ENCODE measurements at regions of chr3 and their contacts with region 1.

Region 1: DNA sequence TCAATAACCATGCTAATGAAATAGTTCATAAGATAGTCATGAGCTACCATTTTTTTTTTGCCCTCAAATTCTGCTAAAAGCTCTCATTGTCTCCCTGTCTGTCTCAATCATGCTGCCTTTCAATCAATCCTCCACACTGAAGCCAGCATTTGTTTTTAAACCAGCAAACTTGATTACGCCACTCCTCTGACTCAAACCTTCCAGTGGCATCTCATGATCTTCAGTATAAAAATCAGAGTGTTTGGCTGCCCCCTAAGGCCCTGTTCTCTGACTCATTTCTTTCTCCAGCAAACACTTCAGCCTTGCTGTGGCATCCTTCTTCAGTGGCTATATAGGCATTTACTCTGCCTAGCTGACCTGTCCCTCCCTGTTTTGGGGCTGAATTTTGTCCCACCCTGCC is 36.0 kb upstream of the EOMES start:
- DNase-seq: no peak
- H3K4me3 ChIP-seq: no peak overlapping the region
- H3K27ac ChIP-seq: no peak overlapping the region
- H3K4me1 ChIP-seq: no peaks in the 10 kb centered on the region
- H3K27me3 ChIP-seq: no peaks in the 10 kb centered on the region
- CTCF ChIP-seq: no peak

Region 2: GRCh38 chr3:27659279-27660021 is 98.6 kb before region 1 on chr3:
- CTCF ChIA-PET with region 1: no interaction called
- POLR2A ChIA-PET with region 1: no interaction called
- intact Hi-C with region 1: no loop called
- DNase-seq: peak; percentile 61
- H3K4me3 ChIP-seq: no peak overlapping the region
- H3K27ac ChIP-seq: no peak overlapping the region
- H3K4me1 ChIP-seq: no peaks in the 10 kb centered on the region
- H3K27me3 ChIP-seq: no peaks in the 10 kb centered on the region
- CTCF ChIP-seq: peak; percentile 79

Region 3: GRCh38 chr3:27737091-27737490 is 21.0 kb before region 1 on chr3:
- CTCF ChIA-PET with region 1: no interaction called
- POLR2A ChIA-PET with region 1: no interaction called
- intact Hi-C with region 1: loop called (anchors 1 kb)
- DNase-seq: no peak
- H3K4me3 ChIP-seq: no peak overlapping the region
- H3K27ac ChIP-seq: no peak overlapping the region
- H3K4me1 ChIP-seq: no peaks in the 10 kb centered on the region
- H3K27me3 ChIP-seq: peaks cover 20% of the 10 kb centered on the region
- CTCF ChIP-seq: no peak

Region 4: GRCh38 chr3:28099296-28099695 is 341.2 kb after region 1 on chr3:
- CTCF ChIA-PET with region 1: no interaction called
- POLR2A ChIA-PET with region 1: no interaction called
- intact Hi-C with region 1: no loop called
- DNase-seq: no peak
- H3K4me3 ChIP-seq: no peak overlapping the region
- H3K27ac ChIP-seq: no peak overlapping the region
- H3K4me1 ChIP-seq: no peaks in the 10 kb centered on the region
- H3K27me3 ChIP-seq: no peaks in the 10 kb centered on the region
- CTCF ChIP-seq: no peak